ENCODE measurements at regions of chr11 and their contacts with region 1.

Region 1: DNA sequence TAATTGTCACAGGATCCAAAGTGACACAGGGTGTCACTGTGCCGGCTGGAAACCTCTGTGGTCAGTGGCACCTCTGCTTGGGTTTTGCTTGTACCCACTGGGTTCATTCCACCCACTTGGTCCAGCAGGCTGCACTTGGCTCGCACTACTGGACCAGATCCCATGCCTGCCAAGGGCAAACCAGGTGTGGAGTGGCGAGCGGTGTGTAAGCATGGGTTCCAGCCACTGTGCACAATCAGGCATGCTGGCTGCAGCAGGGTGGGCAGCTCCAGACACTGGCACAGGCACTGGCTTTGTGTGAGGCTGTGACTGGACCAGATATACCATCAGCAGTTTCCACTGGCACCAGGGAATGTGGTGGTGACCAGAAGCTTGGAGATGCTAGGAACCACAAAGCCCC is 261.4 kb downstream of the KCNA4 start:
- DNase-seq: peak; percentile 54
- H3K4me3 ChIP-seq: no peak overlapping the region
- H3K27ac ChIP-seq: no peak overlapping the region
- H3K4me1 ChIP-seq: no peaks in the 10 kb centered on the region
- H3K27me3 ChIP-seq: no peaks in the 10 kb centered on the region
- CTCF ChIP-seq: no peak
- EP300 ChIP-seq: no peak
- POLR2A ChIP-seq: no peak

Region 2: DNA sequence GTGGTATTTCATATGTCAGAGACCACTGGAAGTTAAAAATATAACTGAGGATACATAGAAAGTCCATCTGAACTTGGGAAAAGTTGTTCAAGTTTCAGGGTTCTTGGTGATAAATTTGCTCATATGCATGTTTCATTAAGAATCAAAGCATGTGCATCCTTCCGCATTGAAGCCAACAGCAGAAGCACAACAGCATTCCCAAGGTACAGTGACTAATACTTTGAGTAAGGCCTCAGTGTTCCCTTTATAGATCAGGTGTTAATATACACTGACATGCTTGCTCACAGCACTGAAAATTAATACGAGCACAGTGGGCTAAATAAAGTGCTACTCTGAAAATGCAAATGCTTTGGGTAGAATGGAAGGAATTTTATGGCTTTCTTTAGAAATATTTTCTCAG is 956.2 kb before region 1 on chr11:
- intact Hi-C with region 1: no loop called
- DNase-seq: no peak
- H3K4me3 ChIP-seq: no peak overlapping the region
- H3K27ac ChIP-seq: no peak overlapping the region
- H3K4me1 ChIP-seq: no peaks in the 10 kb centered on the region
- H3K27me3 ChIP-seq: no peaks in the 10 kb centered on the region
- CTCF ChIP-seq: no peak
- EP300 ChIP-seq: no peak
- POLR2A ChIP-seq: no peak

Region 3: GRCh38 chr11:29712580-29712979 is 42.9 kb before region 1 on chr11:
- intact Hi-C with region 1: no loop called
- DNase-seq: no peak
- H3K4me3 ChIP-seq: no peak overlapping the region
- H3K27ac ChIP-seq: no peak overlapping the region
- H3K4me1 ChIP-seq: no peaks in the 10 kb centered on the region
- H3K27me3 ChIP-seq: no peaks in the 10 kb centered on the region
- CTCF ChIP-seq: no peak
- EP300 ChIP-seq: no peak
- POLR2A ChIP-seq: no peak

Region 4: GRCh38 chr11:29773656-29774264 is 18.3 kb after region 1 on chr11:
- intact Hi-C with region 1: loop called (anchors 2 kb)
- DNase-seq: no peak
- H3K4me3 ChIP-seq: no peak overlapping the region
- H3K27ac ChIP-seq: no peak overlapping the region
- H3K4me1 ChIP-seq: no peaks in the 10 kb centered on the region
- H3K27me3 ChIP-seq: no peaks in the 10 kb centered on the region
- CTCF ChIP-seq: no peak
- EP300 ChIP-seq: no peak
- POLR2A ChIP-seq: no peak